ENCODE measurements at regions of chr3 and their contacts with region 1.

Region 1: GRCh38 chr3:184811999-184812661 is at the start of gene VPS8:
- DNase-seq: peak; percentile 96
- H3K4me3 Mint-ChIP-seq: peak within 1 kb of the TSS; percentile 91
- H3K27ac Mint-ChIP-seq: peak within 1 kb of the TSS; percentile 91
- H3K4me1 Mint-ChIP-seq: peaks cover 56% of the 10 kb centered on the region
- H3K27me3 Mint-ChIP-seq: no peaks in the 10 kb centered on the region
- total RNA-seq, gene VPS8: 36.6 and 40.1 TPM in 2 replicates

Region 2: DNA sequence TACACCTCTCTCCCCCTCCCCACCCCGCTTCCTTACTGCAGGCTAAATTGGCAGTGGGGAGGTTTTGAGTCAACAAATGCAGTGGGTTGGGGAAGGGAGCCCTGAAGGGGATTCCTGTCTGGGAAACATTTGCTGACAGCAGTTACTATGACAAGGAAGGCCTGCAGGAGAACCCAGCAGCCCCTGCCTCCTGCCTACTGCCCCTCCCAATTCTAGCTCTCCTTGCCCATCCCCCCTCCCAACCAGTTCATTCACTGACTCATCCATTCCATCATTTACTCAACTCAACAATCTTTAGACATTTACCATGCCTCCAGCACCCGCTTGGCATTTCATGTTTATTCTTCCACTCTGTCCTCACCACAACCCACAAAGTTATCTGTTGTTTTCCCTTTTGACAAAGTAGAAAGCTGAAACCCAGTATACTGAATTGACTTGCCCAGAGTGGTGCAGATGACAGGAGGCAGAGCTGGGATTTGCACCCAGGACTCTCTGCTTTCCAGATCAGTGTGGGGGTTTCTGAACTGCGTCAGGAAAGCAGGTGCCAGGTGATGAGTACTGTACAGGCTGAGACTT is 175.3 kb before region 1 on chr3:
- intact Hi-C with region 1: loop called (anchors 1 kb)
- DNase-seq: peak; percentile 39
- H3K4me3 Mint-ChIP-seq: no peak overlapping the region
- H3K27ac Mint-ChIP-seq: no peak overlapping the region
- H3K4me1 Mint-ChIP-seq: peaks cover 6% of the 10 kb centered on the region
- H3K27me3 Mint-ChIP-seq: peaks cover 12% of the 10 kb centered on the region

Region 3: GRCh38 chr3:184874709-184875644 is 62.8 kb after region 1 on chr3:
- intact Hi-C with region 1: loop called (anchors 5 kb)
- DNase-seq: no peak
- H3K4me3 Mint-ChIP-seq: no peak overlapping the region
- H3K27ac Mint-ChIP-seq: no peak overlapping the region
- H3K4me1 Mint-ChIP-seq: peaks cover 14% of the 10 kb centered on the region
- H3K27me3 Mint-ChIP-seq: no peaks in the 10 kb centered on the region

Region 4: DNA sequence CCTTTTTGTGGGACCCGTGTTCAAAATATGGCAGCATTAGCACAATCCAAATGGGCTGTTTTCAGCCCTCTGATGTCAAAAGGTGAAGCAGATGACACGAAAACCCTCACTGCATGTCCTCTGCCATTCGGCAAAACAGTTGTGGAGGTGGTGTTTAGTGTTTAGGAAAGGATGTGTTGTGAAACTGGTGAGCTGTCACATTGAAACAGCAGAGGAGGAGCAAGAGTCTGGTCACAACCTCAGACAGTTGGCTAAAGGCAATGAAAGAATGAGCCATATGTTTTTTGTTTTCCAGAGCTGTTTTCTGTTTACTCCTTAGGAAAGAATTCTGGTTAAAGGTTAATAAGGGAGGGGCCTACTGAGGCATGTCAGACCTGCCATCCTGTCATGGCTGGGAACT is 140.5 kb after region 1 on chr3:
- intact Hi-C with region 1: loop called (anchors 10 kb)
- DNase-seq: no peak
- H3K4me3 Mint-ChIP-seq: peak overlapping the region; percentile 57
- H3K27ac Mint-ChIP-seq: peak overlapping the region; percentile 94
- H3K4me1 Mint-ChIP-seq: peaks cover 18% of the 10 kb centered on the region
- H3K27me3 Mint-ChIP-seq: no peaks in the 10 kb centered on the region

Region 5: DNA sequence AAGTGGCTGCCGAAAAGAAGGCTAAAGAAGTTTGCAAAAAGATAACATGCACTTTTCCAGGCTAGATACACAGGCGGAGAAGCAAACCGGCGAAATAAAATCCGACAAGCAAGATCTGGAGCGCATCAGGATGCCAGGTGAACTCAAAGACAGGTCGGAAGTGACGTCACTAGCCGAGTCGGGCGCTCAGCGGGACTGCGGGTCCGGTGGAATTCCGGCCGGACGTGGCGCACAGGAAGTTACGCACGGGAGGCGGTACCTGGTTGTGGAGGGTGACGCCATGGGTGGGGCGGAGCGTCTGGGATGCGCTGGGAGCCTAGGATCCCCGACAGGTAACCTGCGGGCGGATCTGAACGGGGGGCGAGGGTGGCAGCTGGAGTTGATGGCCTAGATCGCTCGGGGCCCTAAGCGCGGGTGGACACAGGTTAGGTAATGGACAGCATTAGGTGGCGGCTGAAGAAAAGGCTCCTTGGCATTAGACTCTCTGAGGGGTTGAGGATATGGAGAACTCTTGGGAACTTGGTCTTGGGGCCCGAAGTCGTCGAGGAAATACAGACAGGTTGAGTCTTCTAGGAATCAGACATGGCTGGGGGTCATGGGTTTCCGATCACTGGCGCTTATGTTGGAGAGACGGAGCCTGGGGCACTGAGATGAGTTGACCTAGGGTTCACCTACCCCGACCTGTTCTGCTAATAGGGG is 470.7 kb after region 1 on chr3:
- intact Hi-C with region 1: loop called (anchors 5 kb)
- DNase-seq: peak; percentile 90
- H3K4me3 Mint-ChIP-seq: peak overlapping the region; percentile 96
- H3K27ac Mint-ChIP-seq: peak overlapping the region; percentile 84
- H3K4me1 Mint-ChIP-seq: peaks cover 17% of the 10 kb centered on the region
- H3K27me3 Mint-ChIP-seq: peaks cover 3% of the 10 kb centered on the region

Region 6: GRCh38 chr3:185937689-185938463 is 1125.7 kb after region 1 on chr3 and contains the start of gene TRA2B:
- intact Hi-C with region 1: loop called (anchors 5 kb)
- DNase-seq: peak; percentile 98
- H3K4me3 Mint-ChIP-seq: peak within 1 kb of the TSS; percentile 98
- H3K27ac Mint-ChIP-seq: peak within 1 kb of the TSS; percentile 100
- H3K4me1 Mint-ChIP-seq: peaks cover 34% of the 10 kb centered on the region
- H3K27me3 Mint-ChIP-seq: peaks cover 13% of the 10 kb centered on the region
- total RNA-seq, gene TRA2B: 277 and 282 TPM in 2 replicates